Activated CD8-positive, alpha-beta T cell treated with anti-CD3 and anti-CD28 coated beads for 36 hours (primary cell): ENCODE measurements at regions of chr17 and their contacts with region 1.

Region 1: GRCh38 chr17:51046514-51047384 is 73.9 kb downstream of the SPAG9 start:
- DNase-seq: no peak
- ATAC-seq: no peak
- H3K4me3 Mint-ChIP-seq: no peak overlapping the region
- H3K27ac Mint-ChIP-seq: no peak overlapping the region
- H3K4me1 Mint-ChIP-seq: peaks cover 4% of the 10 kb centered on the region
- H3K27me3 Mint-ChIP-seq: no peaks in the 10 kb centered on the region
- CTCF ChIP-seq: no peak

Region 2: DNA sequence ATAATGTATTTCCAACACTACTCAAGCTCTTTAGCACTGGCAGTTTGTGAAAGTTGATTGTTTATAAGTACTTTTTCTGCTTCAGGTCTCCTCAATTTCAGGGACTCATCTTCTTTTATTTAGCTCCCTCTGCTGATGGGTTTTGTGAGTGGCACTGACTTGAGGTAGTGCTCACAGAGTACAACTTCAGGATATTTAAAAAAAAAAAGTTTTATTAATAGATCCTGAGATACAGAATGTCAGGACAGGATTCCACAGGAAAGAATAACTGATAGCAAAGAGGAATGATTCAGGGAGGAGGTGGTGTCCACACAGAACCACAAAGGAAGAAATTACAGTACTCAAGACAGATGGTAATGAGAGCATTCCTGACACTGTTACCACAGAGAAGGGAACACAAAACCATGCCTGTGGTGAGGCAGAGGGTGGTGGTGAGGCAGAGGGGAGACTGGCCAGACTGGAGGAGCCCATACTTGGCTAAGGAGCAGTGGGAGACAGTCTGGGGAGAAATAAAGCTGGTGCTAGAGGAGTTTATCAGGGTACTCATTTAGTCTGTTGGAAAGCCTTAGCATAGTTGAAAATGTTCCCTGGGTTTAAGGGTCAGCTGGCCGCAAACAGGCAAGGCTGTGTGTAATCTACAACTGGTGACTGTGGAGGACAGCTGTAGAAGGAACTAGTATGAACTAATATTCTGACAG is 10.2 kb after region 1 on chr17:
- CTCF ChIA-PET with region 1: interaction called, 13 read pairs
- POLR2A ChIA-PET with region 1: no interaction called
- intact Hi-C with region 1: no loop called
- DNase-seq: peak; percentile 34
- ATAC-seq: no peak
- H3K4me3 Mint-ChIP-seq: no peak overlapping the region
- H3K27ac Mint-ChIP-seq: no peak overlapping the region
- H3K4me1 Mint-ChIP-seq: peaks cover 7% of the 10 kb centered on the region
- H3K27me3 Mint-ChIP-seq: no peaks in the 10 kb centered on the region
- CTCF ChIP-seq: peak; percentile 54